Activated CD4-positive, alpha-beta T cell treated with anti-CD3 and anti-CD28 coated beads, Interleukin-2, amount 10 ng/mL, durations not matched to agents 24 days and 14 days (primary cell): ENCODE measurements at regions of chr9 and their contacts with region 1.

Region 1: DNA sequence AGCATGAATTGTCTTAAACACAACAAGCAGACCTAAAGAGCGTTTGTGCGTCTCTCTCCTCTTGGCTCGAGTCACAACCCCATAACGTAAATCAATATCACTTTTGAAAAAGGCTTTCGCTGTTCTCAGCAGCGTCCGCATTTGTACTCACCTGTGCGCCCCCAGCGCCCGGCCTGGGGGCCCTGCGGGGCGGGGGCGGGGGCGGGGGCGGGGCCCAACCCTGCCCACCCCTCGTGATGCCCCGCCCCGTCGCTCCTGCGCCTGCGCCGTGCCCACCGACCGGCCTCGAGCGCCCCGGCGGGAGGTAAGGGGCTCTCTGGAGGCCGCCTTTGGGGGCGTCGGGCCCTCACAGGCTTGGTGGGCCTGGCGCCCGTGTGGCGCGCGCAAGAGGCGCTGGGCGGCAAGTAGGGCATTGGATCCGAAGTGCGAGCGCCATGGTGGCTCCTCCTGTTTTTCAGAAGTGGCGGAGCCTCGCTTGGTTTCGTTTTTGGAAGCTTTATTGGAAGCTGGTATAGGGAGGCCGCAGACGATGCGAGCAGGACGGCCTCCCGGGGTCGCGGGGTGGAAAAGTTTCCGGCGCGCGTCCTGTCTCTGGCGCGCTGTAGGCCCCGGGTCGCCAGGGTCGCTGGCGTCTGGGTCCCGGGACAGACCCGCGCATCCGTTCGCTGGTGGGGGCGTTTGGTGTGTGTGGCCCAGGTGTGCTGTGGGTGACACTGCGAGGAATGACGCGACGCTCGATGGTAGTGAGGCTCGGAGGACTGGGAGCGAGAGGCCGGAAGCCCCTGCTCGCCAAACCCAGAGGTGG is at the start of gene STX17:
- DNase-seq: peak; percentile 94
- H3K4me3 Mint-ChIP-seq: peak within 1 kb of the TSS; percentile 98
- H3K27ac Mint-ChIP-seq: peak within 1 kb of the TSS; percentile 97
- H3K4me1 Mint-ChIP-seq: peaks cover 26% of the 10 kb centered on the region
- H3K27me3 Mint-ChIP-seq: peaks cover 16% of the 10 kb centered on the region
- total RNA-seq, gene STX17: 20.9 and 26.5 TPM in 2 replicates

Region 2: GRCh38 chr9:99104459-99105151 is 802.0 kb before region 1 on chr9 and contains the start of gene TGFBR1:
- intact Hi-C with region 1: no loop called
- DNase-seq: peak; percentile 99
- H3K4me3 Mint-ChIP-seq: peak within 1 kb of the TSS; percentile 90
- H3K27ac Mint-ChIP-seq: peak within 1 kb of the TSS; percentile 84
- H3K4me1 Mint-ChIP-seq: peaks cover 53% of the 10 kb centered on the region
- H3K27me3 Mint-ChIP-seq: no peaks in the 10 kb centered on the region
- total RNA-seq, gene TGFBR1: 29.7 and 35.3 TPM in 2 replicates

Region 3: DNA sequence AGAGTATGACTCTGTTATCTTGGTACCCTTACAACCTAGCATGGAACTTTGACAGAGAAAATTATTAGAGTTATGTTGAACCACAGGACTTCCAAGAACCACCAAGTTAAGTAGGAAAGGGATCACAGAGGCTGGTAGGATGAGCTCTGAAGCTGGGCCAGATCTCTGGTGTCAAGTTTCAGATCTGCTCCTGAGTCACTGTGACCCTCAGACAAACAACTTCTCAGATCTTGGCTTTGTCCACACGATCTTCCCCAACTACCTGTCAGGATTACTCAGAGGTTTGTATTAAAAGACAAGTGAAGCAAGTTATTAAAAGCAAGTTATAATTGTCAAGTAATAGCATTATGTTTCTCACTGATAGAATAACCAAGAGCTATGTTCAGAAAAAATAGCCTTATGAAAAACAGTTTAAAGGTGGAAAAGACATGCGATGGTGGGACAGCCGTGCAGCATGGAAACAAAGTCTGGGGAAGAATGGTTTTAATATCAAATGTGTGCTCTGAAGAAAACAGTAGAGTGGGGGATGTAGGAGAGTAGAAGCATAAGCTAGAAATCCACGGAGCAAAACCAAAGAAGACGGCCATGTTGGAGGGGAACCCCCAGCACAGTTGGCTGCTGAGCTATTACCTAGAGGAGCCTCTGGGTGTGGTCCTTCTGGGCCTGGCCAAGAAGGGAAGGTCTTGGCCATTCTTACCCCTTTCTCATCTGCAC is 495.4 kb before region 1 on chr9:
- intact Hi-C with region 1: no loop called
- DNase-seq: no peak
- H3K4me3 Mint-ChIP-seq: no peak overlapping the region
- H3K27ac Mint-ChIP-seq: no peak overlapping the region
- H3K4me1 Mint-ChIP-seq: peaks cover 7% of the 10 kb centered on the region
- H3K27me3 Mint-ChIP-seq: peaks cover 6% of the 10 kb centered on the region

Region 4: GRCh38 chr9:99851500-99851822 is 55.1 kb before region 1 on chr9:
- intact Hi-C with region 1: loop called (anchors 10 kb)
- DNase-seq: peak; percentile 90
- H3K4me3 Mint-ChIP-seq: peak overlapping the region; percentile 49
- H3K27ac Mint-ChIP-seq: peak overlapping the region; percentile 10
- H3K4me1 Mint-ChIP-seq: peaks cover 49% of the 10 kb centered on the region
- H3K27me3 Mint-ChIP-seq: no peaks in the 10 kb centered on the region

Region 5: DNA sequence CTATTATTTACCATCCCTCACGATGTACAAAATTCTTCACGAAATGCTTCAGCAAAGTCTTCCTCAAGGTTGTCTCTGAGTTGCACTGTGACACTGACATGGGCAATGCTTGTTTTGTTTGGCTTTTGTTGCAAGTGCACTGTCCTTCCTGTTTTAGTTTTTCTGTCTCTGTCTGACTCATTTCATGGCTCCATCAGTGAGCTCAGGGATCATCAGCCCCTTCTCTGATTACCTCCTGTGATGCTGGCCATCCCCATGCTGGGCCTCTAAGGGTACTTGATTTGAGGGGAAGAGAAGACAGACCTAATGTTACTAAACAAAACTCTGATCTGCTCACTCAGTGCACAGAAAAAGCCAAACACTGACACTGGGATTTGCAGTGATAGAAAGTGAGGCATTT is 37.8 kb before region 1 on chr9:
- intact Hi-C with region 1: loop called (anchors 2 kb)
- DNase-seq: peak; percentile 65
- H3K4me3 Mint-ChIP-seq: no peak overlapping the region
- H3K27ac Mint-ChIP-seq: peak overlapping the region; percentile 42
- H3K4me1 Mint-ChIP-seq: peaks cover 30% of the 10 kb centered on the region
- H3K27me3 Mint-ChIP-seq: no peaks in the 10 kb centered on the region

Region 6: DNA sequence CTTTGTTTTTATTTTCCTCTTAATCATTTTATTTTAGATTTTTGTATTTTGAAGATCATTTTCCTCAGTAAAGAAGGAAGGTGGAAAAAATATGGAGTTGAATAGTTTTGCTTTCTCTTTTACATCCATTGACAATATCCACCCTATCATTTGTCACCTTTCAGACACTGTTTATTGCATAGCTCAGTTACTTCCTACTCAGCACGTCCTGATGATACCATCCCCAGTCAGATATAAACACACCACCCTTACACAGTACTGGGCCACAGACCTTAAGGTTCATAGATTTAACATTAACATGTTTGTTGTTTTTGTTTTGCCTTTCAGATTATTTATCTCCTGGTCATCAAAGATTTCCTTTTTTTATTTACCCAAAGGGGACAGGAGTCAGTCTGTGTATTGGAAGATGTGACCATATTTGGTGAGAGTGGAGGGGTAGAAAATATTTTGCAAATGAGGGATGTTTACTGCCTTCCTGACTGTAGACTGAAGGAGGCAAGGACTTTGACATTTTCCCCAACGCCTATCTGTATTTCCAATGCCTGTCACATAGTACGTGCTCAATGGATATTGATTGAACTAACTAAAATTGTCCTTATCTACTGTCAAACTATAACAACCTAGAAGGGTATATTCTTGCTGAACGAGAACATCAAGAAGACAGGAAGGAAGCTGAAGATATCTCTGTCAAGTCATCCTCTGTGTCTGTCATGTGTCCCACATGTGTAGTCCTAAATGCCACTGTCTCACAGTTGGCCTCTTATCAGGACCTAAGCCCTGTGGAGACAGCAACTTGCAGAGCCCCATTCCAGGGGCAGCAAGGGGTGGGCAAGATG is 15.5 kb after region 1 on chr9:
- intact Hi-C with region 1: loop called (anchors 2 kb)
- DNase-seq: no peak
- H3K4me3 Mint-ChIP-seq: no peak overlapping the region
- H3K27ac Mint-ChIP-seq: peak overlapping the region; percentile 59
- H3K4me1 Mint-ChIP-seq: peaks cover 31% of the 10 kb centered on the region
- H3K27me3 Mint-ChIP-seq: no peaks in the 10 kb centered on the region

Region 7: DNA sequence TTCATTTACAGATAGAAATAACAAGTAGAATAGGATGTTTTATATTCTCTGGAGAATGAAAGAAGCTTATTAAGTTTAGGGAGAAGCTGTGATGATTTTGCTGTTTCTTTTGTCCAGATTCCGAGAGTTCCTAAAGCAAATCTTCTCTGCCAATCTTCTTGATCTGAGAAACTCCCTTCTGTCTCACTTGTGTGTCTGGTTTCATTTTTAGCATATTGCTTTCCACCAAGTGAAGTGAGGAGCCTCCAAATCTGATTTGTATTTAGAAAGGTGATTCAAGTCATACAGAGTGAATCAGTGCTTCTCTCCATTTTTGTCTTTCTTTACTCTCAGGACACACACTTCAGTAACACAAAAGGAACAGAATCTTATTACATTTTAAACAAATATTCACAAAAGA is 48.2 kb after region 1 on chr9:
- intact Hi-C with region 1: loop called (anchors 5 kb)
- DNase-seq: no peak
- H3K4me3 Mint-ChIP-seq: no peak overlapping the region
- H3K27ac Mint-ChIP-seq: peak overlapping the region; percentile 1
- H3K4me1 Mint-ChIP-seq: peaks cover 10% of the 10 kb centered on the region
- H3K27me3 Mint-ChIP-seq: no peaks in the 10 kb centered on the region

Region 8: GRCh38 chr9:100352727-100353505 is 446.3 kb after region 1 on chr9 and contains the start of gene TEX10:
- intact Hi-C with region 1: loop called (anchors 10 kb)
- DNase-seq: peak; percentile 97
- H3K4me3 Mint-ChIP-seq: peak within 1 kb of the TSS; percentile 88
- H3K27ac Mint-ChIP-seq: peak within 1 kb of the TSS; percentile 56
- H3K4me1 Mint-ChIP-seq: peaks cover 32% of the 10 kb centered on the region
- H3K27me3 Mint-ChIP-seq: no peaks in the 10 kb centered on the region
- total RNA-seq, gene TEX10: 31.3 and 32.8 TPM in 2 replicates